ENCODE measurements at regions of chr13 and their contacts with region 1.

Region 1: DNA sequence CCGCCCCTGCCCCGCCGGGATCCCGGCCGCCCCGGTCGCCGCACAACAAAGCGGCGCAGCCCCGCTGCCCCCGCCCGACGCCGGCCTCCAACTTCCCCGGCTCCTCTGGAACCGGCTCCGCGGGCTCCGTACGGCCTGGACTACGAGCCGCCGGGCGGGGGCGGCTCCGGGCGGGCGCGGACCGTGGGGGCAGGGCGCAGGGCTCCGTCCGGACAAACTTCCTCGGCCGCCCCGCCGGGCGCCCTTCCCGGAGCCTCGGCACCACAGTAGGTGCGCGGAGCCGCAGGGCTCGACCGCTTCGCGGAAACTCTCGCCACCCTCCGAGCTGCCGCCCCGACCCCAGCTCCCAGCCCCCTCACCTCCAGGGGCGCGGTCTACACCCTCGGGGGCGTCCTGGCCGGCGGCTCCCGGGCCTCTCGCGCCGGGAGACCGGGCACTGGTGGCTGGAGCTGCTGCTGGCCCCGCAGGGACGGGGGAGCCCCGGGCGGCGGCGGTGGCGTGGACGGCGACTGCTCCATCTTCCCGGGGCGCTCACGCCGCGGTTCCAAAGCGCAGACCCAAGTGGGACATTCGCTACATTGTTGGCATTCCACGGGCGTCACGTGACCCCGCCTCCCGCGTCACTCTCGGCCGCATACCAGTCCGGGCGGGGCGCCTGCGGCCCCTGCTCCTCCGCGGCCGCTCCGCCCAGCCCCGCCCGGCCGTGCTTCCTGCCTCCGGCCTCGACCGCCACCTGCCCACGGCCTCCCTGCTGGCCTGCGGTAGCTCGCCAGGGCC is at the start of gene LATS2:
- DNase-seq: peak; percentile 63
- ATAC-seq: peak; percentile 81
- H3K4me3 Mint-ChIP-seq: peak within 1 kb of the TSS; percentile 79
- H3K27ac Mint-ChIP-seq: peak within 1 kb of the TSS; percentile 50
- H3K4me1 Mint-ChIP-seq: peaks cover 3% of the 10 kb centered on the region
- H3K27me3 Mint-ChIP-seq: peaks cover 11% of the 10 kb centered on the region
- CTCF ChIP-seq: no peak
- total RNA-seq, gene LATS2: 1.5 and 1.7 TPM in 2 replicates

Region 2: DNA sequence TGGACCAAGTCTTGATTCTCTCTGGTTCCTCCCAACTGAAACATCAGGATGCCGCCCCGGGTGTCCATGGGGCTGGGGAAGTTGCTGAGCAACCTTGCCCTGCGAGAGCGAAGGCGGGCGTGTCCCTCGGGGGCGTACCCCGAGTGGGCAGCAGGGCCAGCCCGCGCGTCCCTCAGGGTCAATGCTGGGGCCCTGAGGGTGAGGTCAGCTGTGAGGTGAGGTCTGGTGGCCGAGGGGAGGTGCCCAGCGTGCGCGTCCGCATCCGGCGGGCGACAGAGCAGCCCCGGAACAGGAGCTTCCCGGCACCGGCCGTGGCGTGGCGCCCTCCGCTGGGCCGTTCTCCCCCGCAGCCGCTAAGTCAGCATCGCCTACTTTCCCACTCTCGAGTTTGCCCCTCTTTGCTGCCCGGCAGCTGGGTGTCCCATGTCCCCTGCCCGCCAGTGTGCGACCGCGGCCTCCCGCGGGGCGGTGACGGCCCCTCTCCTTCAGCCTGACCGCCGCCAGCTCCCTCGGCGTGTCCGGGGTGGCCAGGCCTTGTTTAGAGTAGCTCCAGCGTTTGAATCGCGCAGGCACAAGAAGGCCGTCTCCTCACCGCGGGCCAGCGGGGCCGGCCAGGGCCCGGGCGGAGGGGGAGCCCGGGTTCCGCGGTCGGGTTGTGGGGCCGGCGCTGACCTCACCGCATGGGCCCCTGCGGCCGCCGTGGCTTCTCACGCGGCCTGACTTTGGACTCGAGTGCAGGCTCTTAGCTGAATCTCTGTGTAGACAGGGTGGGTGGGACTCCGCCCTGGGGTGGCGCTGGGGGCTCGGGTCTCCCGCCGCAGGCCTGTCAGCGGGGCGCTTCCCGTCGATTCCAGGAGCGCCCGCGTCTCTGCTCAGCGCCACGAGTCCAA is 933.4 kb before region 1 on chr13:
- CTCF ChIA-PET with region 1: no interaction called
- POLR2A ChIA-PET with region 1: no interaction called
- intact Hi-C with region 1: loop called (anchors 5 kb)
- DNase-seq: peak; percentile 31
- ATAC-seq: peak; percentile 67
- H3K4me3 Mint-ChIP-seq: peak overlapping the region; percentile 66
- H3K27ac Mint-ChIP-seq: no peak overlapping the region
- H3K4me1 Mint-ChIP-seq: peaks cover 11% of the 10 kb centered on the region
- H3K27me3 Mint-ChIP-seq: peaks cover 22% of the 10 kb centered on the region
- CTCF ChIP-seq: no peak

Region 3: DNA sequence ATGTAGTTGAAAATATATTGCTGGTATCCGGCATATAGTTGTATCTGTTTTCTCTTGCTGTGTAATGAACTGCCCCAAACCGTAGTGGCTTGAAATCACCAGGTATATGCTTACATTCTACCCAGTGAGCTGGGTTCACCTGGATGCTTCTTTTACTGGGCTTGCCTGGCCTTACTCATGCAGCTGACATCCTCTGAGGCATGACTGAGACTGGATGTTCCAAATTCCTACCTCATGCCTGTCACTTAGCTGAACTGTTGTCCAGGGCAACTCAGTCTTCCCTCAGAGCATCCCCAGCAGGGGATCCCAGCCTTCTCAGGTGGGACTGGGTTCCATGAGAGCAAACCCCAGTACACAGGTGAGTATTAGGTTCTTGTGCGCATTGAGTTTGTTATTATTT is 427.4 kb before region 1 on chr13:
- CTCF ChIA-PET with region 1: no interaction called
- POLR2A ChIA-PET with region 1: no interaction called
- intact Hi-C with region 1: no loop called
- DNase-seq: no peak
- ATAC-seq: no peak
- H3K4me3 Mint-ChIP-seq: no peak overlapping the region
- H3K27ac Mint-ChIP-seq: no peak overlapping the region
- H3K4me1 Mint-ChIP-seq: no peaks in the 10 kb centered on the region
- H3K27me3 Mint-ChIP-seq: no peaks in the 10 kb centered on the region
- CTCF ChIP-seq: no peak

Region 4: GRCh38 chr13:21075011-21075898 is 14.1 kb after region 1 on chr13:
- CTCF ChIA-PET with region 1: no interaction called
- POLR2A ChIA-PET with region 1: no interaction called
- intact Hi-C with region 1: loop called (anchors 1 kb)
- DNase-seq: peak; percentile 18
- ATAC-seq: peak; percentile 66
- H3K4me3 Mint-ChIP-seq: peak overlapping the region; percentile 74
- H3K27ac Mint-ChIP-seq: no peak overlapping the region
- H3K4me1 Mint-ChIP-seq: peaks cover 16% of the 10 kb centered on the region
- H3K27me3 Mint-ChIP-seq: peaks cover 38% of the 10 kb centered on the region
- CTCF ChIP-seq: no peak

Region 5: GRCh38 chr13:21124852-21125251 is 63.7 kb after region 1 on chr13:
- CTCF ChIA-PET with region 1: no interaction called
- POLR2A ChIA-PET with region 1: no interaction called
- intact Hi-C with region 1: no loop called
- DNase-seq: no peak
- ATAC-seq: no peak
- H3K4me3 Mint-ChIP-seq: no peak overlapping the region
- H3K27ac Mint-ChIP-seq: no peak overlapping the region
- H3K4me1 Mint-ChIP-seq: no peaks in the 10 kb centered on the region
- H3K27me3 Mint-ChIP-seq: peaks cover 17% of the 10 kb centered on the region
- CTCF ChIP-seq: no peak

Region 6: GRCh38 chr13:21670883-21671619 is 609.9 kb after region 1 on chr13 and contains the start of gene FGF9:
- CTCF ChIA-PET with region 1: no interaction called
- POLR2A ChIA-PET with region 1: no interaction called
- intact Hi-C with region 1: loop called (anchors 10 kb)
- DNase-seq: peak; percentile 76
- ATAC-seq: peak; percentile 77
- H3K4me3 Mint-ChIP-seq: peak within 1 kb of the TSS; percentile 85
- H3K27ac Mint-ChIP-seq: peak within 1 kb of the TSS; percentile 61
- H3K4me1 Mint-ChIP-seq: peaks cover 48% of the 10 kb centered on the region
- H3K27me3 Mint-ChIP-seq: peaks cover 43% of the 10 kb centered on the region
- CTCF ChIP-seq: no peak
- total RNA-seq, gene FGF9: 0.22 and 0.49 TPM in 2 replicates

Measured in activated B cell treated with CpG ODN at 0.5 μM for 24 hours (primary cell).